Ascending aorta (tissue), 2 donors: ENCODE measurements at regions of chr9 and their contacts with region 1.

Region 1: GRCh38 chr9:105557771-105558610 is at the start of gene FKTN:
- DNase-seq: peak; percentile 64 to 91
- H3K4me3 ChIP-seq: peak within 1 kb of the TSS; percentile 72 to 85
- H3K27ac ChIP-seq: peak within 1 kb of the TSS; percentile 54 to 56
- H3K4me1 ChIP-seq: peaks cover 0 to 8% of the 10 kb centered on the region in 2 donors
- H3K27me3 ChIP-seq: no peaks in the 10 kb centered on the region
- CTCF ChIP-seq: no peak
- total RNA-seq, gene FKTN: 5.4 TPM

Region 2: DNA sequence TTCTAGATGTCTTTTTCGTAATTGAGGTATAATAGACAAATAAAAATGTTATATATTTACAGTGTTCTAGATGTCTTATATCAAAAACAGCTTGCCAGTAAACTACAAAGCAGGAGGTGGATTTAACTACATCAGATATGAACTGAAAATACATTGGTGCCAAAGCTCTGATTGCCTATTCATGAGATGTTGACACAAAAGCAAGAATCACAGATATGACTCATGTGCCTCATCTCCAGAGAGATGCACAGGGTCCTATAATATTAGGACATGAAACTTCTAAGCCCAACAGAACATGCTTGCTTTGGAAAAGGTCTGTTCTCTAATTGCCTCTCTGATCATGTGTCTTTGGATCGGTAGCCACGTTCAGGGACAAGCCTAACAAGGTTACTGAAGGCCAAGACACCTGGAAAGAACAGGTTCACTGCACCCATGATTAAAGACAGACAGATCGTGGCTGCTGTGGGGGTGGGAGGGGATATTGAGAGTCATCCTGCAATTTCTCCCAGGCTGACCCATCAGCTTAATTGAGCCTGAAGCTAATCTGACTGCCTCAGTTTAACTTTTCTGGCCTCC is 646.9 kb before region 1 on chr9:
- intact Hi-C with region 1: loop called (anchors 10 kb)
- DNase-seq: no peak
- H3K4me3 ChIP-seq: no peak overlapping the region
- H3K27ac ChIP-seq: no peak overlapping the region
- H3K4me1 ChIP-seq: peaks cover 3 to 36% of the 10 kb centered on the region in 2 donors
- H3K27me3 ChIP-seq: no peaks in the 10 kb centered on the region
- CTCF ChIP-seq: no peak

Region 3: GRCh38 chr9:105346273-105346672 is 211.7 kb before region 1 on chr9:
- intact Hi-C with region 1: no loop called
- DNase-seq: no peak
- H3K4me3 ChIP-seq: no peak overlapping the region
- H3K27ac ChIP-seq: no peak overlapping the region
- H3K4me1 ChIP-seq: peaks cover 0 to 3% of the 10 kb centered on the region in 2 donors
- H3K27me3 ChIP-seq: no peaks in the 10 kb centered on the region
- CTCF ChIP-seq: no peak

Region 4: GRCh38 chr9:105447814-105448812 is 109.9 kb before region 1 on chr9 and contains the start of gene FSD1L:
- intact Hi-C with region 1: loop called (anchors 5 kb)
- DNase-seq: peak; percentile 67 to 94
- H3K4me3 ChIP-seq: peak within 1 kb of the TSS; percentile 77 to 88
- H3K27ac ChIP-seq: peak within 1 kb of the TSS; percentile 59 to 66
- H3K4me1 ChIP-seq: no peaks in the 10 kb centered on the region
- H3K27me3 ChIP-seq: no peaks in the 10 kb centered on the region
- CTCF ChIP-seq: peak in 2 of 3 experiments; percentile 19 to 27
- total RNA-seq, gene FSD1L: 0.43 TPM